Posterior vena cava (tissue), 2 donors: ENCODE measurements at regions of chr20 and their contacts with region 1.

Region 1: DNA sequence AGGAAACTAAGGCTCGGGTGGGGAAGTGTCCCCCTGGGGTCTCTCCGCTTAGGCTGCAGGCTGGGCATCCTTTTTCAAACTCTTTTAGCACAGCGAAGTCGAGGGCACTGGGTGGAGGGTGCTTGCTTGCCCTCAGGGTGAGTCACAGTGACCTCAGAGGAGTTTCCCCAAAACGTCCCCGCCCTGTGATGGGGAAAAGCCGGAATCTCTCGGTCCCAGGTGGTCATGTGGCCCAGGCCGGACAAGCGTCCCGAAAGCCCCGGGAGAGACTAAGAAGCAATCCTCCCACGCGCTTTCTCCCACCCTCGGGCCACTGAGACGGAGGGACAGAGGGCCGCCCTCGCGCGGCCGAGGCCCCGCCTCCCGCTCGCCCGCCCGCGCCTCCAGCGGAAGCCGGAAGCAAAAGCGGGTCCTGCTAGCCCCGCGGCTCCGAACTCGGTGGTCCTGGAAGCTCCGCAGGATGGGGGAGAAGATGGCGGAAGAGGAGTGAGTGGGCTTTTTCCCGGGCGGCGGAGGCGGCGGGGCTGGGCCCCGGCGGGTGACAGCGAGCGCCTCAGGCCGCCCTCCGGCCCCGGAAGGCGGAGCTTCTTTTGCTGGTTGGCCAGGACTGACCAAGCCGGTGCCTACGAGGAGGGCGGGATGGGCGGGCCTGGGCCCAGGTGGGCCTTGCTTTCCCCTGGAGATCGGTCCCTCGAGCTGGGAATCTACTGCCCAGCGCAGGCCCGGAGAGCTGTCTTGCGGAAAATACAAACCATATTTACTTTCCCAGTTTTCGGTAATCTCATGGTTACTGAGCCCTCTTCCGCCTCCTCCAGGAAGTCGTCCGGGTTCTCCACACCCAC is at the start of gene SLC9A8:
- DNase-seq: peak; percentile 97
- total RNA-seq, gene SLC9A8: 10.4 to 11.8 TPM

Region 2: GRCh38 chr20:49713753-49714712 is 98.7 kb before region 1 on chr20 and contains the start of gene B4GALT5:
- intact Hi-C with region 1: loop called in 1 of 2 experiments (anchors 5 kb)
- DNase-seq: peak; percentile 92
- total RNA-seq, gene B4GALT5: 26.1 to 35.2 TPM

Region 3: DNA sequence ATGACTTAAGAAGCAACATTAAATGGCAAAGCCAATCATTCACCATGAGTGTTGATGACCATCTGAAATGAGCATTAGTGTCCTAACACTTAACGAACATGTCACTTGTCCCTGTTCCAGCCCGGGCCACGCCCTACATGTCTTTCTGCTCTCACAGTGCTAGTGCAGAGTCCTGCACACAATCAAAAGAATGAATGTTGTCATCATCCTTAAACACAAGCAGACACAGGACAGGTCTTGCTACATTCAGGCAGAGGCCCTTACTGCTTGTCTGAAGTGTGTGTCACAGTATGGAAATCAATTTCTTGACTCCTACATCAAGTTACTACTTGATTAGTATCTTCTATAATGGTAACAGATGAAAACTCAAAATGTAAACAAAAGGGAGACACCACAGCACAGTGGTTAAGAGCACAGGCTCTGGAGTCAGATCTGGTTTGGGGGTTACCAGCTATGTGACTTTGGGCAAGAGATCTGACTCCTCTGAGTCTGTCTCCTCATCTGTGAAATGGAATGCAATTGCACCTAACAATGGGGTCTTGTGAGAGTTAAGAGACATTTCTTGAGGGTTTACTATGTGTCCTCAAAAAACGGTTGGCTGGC is 282.9 kb after region 1 on chr20:
- intact Hi-C with region 1: loop called in 1 of 2 experiments (anchors 5 kb)
- DNase-seq: no peak